ENCODE measurements at regions of chr9 and their contacts with region 1.

Region 1: GRCh38 chr9:71806901-71807307 is 38.6 kb upstream of the CEMIP2 start:
- DNase-seq: peak; percentile 58 to 85 (median 73)
- H3K4me3 ChIP-seq: no peak overlapping the region
- H3K27ac ChIP-seq: no peak overlapping the region
- H3K4me1 ChIP-seq: peaks cover 0 to 6% of the 10 kb centered on the region in 2 donors
- H3K27me3 ChIP-seq: no peaks in the 10 kb centered on the region
- CTCF ChIP-seq: peak; percentile 72 to 88 (median 84)
- POLR2A ChIP-seq: no peak

Region 2: DNA sequence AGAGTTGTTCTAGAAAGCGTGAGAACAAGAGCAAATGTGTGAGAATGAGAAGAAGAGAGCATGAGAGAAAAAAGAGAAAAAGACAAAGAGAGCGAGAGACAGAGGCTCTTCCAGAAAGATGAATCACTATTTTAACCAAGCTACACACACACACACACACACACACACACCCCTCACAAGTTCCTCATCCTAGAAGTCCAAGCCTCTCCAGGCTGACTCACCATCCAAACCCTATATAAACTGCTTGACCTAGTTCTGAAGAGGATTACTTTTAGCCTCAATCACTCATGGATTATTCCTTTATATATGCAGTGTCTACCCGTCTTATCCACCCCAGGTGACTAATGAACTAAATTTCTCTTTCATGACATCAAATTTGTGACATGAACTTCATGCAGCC is 215.9 kb after region 1 on chr9:
- intact Hi-C with region 1: loop called (anchors 5 to 10 kb)
- DNase-seq: peak in 1 of 7 donors; percentile 30
- H3K4me3 ChIP-seq: no peak overlapping the region
- H3K27ac ChIP-seq: no peak overlapping the region
- H3K4me1 ChIP-seq: no peaks in the 10 kb centered on the region
- H3K27me3 ChIP-seq: no peaks in the 10 kb centered on the region
- CTCF ChIP-seq: no peak
- POLR2A ChIP-seq: no peak